Activated naive CD4-positive, alpha-beta T cell treated with anti-CD3 and anti-CD28 coated beads for 36 hours (primary cell): ENCODE measurements at regions of chr11 and their contacts with region 1.

Region 1: GRCh38 chr11:6315811-6316425 is 4.4 kb downstream of the CAVIN3 start:
- DNase-seq: peak; percentile 46
- H3K4me3 Mint-ChIP-seq: no peak overlapping the region
- H3K27ac Mint-ChIP-seq: no peak overlapping the region
- H3K4me1 Mint-ChIP-seq: peaks cover 9% of the 10 kb centered on the region
- H3K27me3 Mint-ChIP-seq: peaks cover 44% of the 10 kb centered on the region

Region 2: DNA sequence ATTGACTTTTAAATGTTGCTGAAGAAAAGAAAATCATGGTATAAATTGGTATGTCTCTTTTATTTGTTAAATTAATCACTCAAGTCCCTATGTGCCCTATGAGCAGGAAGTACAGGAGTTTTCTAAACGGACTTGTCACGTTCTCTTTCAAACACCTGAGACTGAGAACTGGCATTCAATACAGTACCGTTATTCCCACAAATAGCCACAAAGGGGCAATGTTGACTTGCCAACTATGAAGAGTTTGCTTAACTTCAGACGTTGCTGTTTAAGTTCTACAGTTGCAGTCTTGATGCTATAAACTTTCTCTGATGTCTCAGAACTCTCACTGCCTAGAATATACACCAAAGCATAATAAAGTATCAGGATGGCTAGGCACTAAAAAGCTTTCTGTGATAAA is 293.0 kb before region 1 on chr11:
- CTCF ChIA-PET with region 1: interaction called, 4 read pairs
- intact Hi-C with region 1: loop called (anchors 1 kb)
- DNase-seq: peak; percentile 28
- H3K4me3 Mint-ChIP-seq: no peak overlapping the region
- H3K27ac Mint-ChIP-seq: no peak overlapping the region
- H3K4me1 Mint-ChIP-seq: no peaks in the 10 kb centered on the region
- H3K27me3 Mint-ChIP-seq: peaks cover 20% of the 10 kb centered on the region

Region 3: GRCh38 chr11:6258571-6259081 is 57.3 kb before region 1 on chr11:
- CTCF ChIA-PET with region 1: interaction called, 67 read pairs
- intact Hi-C with region 1: loop called (anchors 2 kb)
- DNase-seq: peak; percentile 13
- H3K4me3 Mint-ChIP-seq: no peak overlapping the region
- H3K27ac Mint-ChIP-seq: no peak overlapping the region
- H3K4me1 Mint-ChIP-seq: no peaks in the 10 kb centered on the region
- H3K27me3 Mint-ChIP-seq: peaks cover 7% of the 10 kb centered on the region

Region 4: DNA sequence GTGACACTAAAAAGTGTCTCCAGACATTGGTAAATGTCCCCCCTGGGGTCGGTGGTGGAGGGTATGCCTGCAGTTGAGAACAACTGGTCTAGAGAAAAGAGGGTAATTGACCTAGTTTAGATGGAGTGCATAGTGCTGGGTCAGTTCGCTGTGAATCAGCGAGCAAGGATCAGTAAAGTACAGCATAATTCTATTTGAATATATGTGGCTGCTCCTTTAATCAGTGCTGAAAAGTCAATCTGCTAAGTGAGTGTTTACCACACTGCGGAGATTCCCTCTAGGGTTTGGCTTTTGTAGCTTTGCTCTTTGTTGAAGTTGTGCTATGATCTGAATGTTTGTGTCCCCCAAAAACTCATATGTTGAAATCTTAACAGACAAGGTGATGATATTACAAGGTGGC is 10.6 kb before region 1 on chr11:
- CTCF ChIA-PET with region 1: interaction called, 11 read pairs
- intact Hi-C with region 1: no loop called
- DNase-seq: no peak
- H3K4me3 Mint-ChIP-seq: no peak overlapping the region
- H3K27ac Mint-ChIP-seq: no peak overlapping the region
- H3K4me1 Mint-ChIP-seq: no peaks in the 10 kb centered on the region
- H3K27me3 Mint-ChIP-seq: peaks cover 29% of the 10 kb centered on the region

Region 5: DNA sequence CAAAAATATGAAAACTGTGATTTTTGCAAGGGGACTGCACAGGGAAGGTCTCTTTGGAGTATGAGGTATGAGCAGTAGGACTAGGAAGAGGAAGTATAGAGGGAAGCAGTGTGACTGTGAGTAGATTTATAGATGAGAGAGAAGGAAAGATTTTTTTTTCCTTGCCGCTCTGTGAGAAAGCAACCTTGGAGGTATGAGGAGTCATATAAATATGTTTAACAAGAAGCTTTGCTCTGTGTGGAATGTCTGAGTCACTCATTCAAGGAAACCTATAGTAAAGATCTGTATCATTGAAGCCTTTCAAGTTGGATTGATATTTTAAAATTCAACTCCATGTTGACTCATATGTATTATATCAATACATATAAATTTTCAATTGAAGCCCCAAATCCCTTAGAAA is 207.3 kb after region 1 on chr11:
- CTCF ChIA-PET with region 1: no interaction called
- intact Hi-C with region 1: loop called (anchors 5 kb)
- DNase-seq: no peak
- H3K4me3 Mint-ChIP-seq: no peak overlapping the region
- H3K27ac Mint-ChIP-seq: peak overlapping the region; percentile 48
- H3K4me1 Mint-ChIP-seq: peaks cover 46% of the 10 kb centered on the region
- H3K27me3 Mint-ChIP-seq: no peaks in the 10 kb centered on the region